ENCODE measurements at regions of chrX and their contacts with region 1.

Region 1: GRCh38 chrX:9677098-9677739 is 88.4 kb downstream of the GPR143 start:
- DNase-seq: peak; percentile 37
- H3K4me3 Mint-ChIP-seq: peak overlapping the region; percentile 33
- H3K27ac Mint-ChIP-seq: peak overlapping the region; percentile 64
- H3K4me1 Mint-ChIP-seq: peaks cover 18% of the 10 kb centered on the region
- H3K27me3 Mint-ChIP-seq: no peaks in the 10 kb centered on the region

Region 2: GRCh38 chrX:9231491-9231890 is 445.7 kb before region 1 on chrX:
- intact Hi-C with region 1: loop called (anchors 1 kb)
- DNase-seq: no peak
- H3K4me3 Mint-ChIP-seq: no peak overlapping the region
- H3K27ac Mint-ChIP-seq: peak overlapping the region; percentile 52
- H3K4me1 Mint-ChIP-seq: peaks cover 14% of the 10 kb centered on the region
- H3K27me3 Mint-ChIP-seq: peaks cover 2% of the 10 kb centered on the region

Region 3: GRCh38 chrX:9352694-9353411 is 324.4 kb before region 1 on chrX:
- intact Hi-C with region 1: loop called (anchors 1 kb)
- DNase-seq: no peak
- H3K4me3 Mint-ChIP-seq: peak overlapping the region; percentile 53
- H3K27ac Mint-ChIP-seq: peak overlapping the region; percentile 77
- H3K4me1 Mint-ChIP-seq: peaks cover 35% of the 10 kb centered on the region
- H3K27me3 Mint-ChIP-seq: no peaks in the 10 kb centered on the region

Region 4: GRCh38 chrX:9464435-9465371 is 212.5 kb before region 1 on chrX and contains the start of gene TBL1X:
- intact Hi-C with region 1: loop called (anchors 1 kb)
- DNase-seq: peak; percentile 46
- H3K4me3 Mint-ChIP-seq: peak within 1 kb of the TSS; percentile 71
- H3K27ac Mint-ChIP-seq: peak within 1 kb of the TSS; percentile 88
- H3K4me1 Mint-ChIP-seq: peaks cover 43% of the 10 kb centered on the region
- H3K27me3 Mint-ChIP-seq: peaks cover 3% of the 10 kb centered on the region
- total RNA-seq, gene TBL1X: 24.0 and 29.2 TPM in 2 replicates

Region 5: DNA sequence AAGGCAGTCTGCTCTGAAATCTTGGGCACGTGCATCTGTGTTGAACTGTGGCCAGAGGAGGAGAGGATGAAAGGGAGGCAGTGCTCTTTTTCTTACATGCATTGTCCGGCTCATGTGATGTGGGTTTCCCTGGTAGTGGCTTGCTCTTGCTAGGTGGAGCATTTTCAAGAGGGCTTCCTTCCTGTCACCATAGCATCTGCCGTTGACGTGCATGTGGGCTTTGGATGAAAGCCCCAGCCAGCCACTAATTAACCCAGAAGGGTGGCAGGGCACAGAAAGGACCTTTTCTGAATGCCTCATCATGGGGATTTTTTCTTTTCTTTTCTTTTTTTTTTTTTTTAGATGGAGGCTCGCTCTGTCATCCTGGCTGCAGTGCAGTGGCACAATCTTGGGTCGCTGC is 32.9 kb before region 1 on chrX:
- intact Hi-C with region 1: loop called (anchors 1 kb)
- DNase-seq: peak; percentile 23
- H3K4me3 Mint-ChIP-seq: peak overlapping the region; percentile 26
- H3K27ac Mint-ChIP-seq: peak overlapping the region; percentile 71
- H3K4me1 Mint-ChIP-seq: peaks cover 27% of the 10 kb centered on the region
- H3K27me3 Mint-ChIP-seq: no peaks in the 10 kb centered on the region

Region 6: DNA sequence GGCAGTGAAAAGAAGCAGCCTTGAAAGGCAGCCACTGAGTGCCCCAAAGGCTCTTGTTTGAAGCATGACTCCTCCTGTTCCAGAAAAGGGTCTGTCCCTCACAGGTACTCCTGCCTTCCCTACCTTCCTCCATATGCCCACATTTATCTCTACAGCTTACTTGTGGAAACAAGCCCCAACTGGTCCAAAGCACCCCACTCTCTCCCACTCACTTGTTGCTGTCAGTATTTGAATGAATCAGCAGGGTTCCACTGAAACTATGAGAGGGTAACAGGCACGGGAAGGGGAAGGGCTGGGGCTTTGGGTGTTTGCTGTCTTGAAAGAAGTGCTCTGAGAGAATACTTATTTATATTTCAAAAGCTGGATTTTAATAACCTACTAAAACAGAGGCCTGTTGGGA is 53.5 kb after region 1 on chrX:
- intact Hi-C with region 1: loop called (anchors 2 kb)
- DNase-seq: no peak
- H3K4me3 Mint-ChIP-seq: no peak overlapping the region
- H3K27ac Mint-ChIP-seq: no peak overlapping the region
- H3K4me1 Mint-ChIP-seq: peaks cover 8% of the 10 kb centered on the region
- H3K27me3 Mint-ChIP-seq: peaks cover 2% of the 10 kb centered on the region

Region 7: DNA sequence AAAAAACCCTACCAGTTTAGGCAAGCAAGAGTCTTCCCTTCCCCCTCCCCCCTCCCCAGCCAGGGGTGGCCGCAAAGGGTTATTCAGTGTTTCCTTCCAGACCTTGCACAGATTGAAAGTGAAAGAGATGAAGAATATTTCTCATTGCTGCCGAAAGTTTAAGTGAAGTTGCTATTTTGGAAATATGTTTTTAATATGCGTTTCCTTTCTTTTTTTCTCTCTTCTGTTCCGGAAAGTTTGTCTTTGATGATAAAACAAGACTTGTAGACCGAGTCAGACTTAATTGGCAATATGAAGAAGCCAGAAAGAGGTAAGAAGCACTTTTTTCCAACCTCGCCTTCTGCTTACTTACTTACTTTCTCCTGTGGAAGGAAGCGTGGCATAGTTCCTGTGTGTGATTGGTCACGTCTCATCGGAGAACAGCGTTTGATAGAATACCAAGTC is 421.1 kb after region 1 on chrX:
- intact Hi-C with region 1: loop called (anchors 1 kb)
- DNase-seq: peak; percentile 53
- H3K4me3 Mint-ChIP-seq: peak overlapping the region; percentile 79
- H3K27ac Mint-ChIP-seq: peak overlapping the region; percentile 87
- H3K4me1 Mint-ChIP-seq: peaks cover 34% of the 10 kb centered on the region
- H3K27me3 Mint-ChIP-seq: no peaks in the 10 kb centered on the region